ENCODE measurements at regions of chr9 and their contacts with region 1.

Region 1: GRCh38 chr9:29999645-30000044 is 2384.8 kb upstream of the ACO1 start:
- DNase-seq: no peak
- H3K4me3 Mint-ChIP-seq: no peak overlapping the region
- H3K27ac Mint-ChIP-seq: no peak overlapping the region
- H3K4me1 Mint-ChIP-seq: no peaks in the 10 kb centered on the region
- H3K27me3 Mint-ChIP-seq: no peaks in the 10 kb centered on the region

Region 2: DNA sequence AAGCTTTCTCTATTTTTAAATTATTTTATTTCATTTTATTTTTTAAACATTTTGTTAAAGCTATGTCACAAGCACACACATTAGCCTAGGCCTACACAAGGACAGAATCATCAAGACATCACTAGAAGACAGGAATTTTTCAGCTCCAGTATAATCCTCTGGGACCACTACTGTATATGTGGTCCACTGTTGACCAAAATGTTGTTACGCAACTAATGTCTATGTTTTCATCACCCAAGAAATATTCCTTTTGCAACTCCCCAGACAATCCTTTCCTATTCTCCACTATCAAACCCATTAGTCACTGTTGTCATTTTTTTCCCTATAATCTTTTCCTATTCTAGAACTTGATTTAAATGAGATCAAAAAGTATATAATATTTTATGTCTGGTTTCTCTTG is 54.6 kb before region 1 on chr9:
- intact Hi-C with region 1: loop called (anchors 10 kb)
- DNase-seq: no peak
- H3K4me3 Mint-ChIP-seq: no peak overlapping the region
- H3K27ac Mint-ChIP-seq: no peak overlapping the region
- H3K4me1 Mint-ChIP-seq: no peaks in the 10 kb centered on the region
- H3K27me3 Mint-ChIP-seq: no peaks in the 10 kb centered on the region

Measured in activated T-helper 2 cell treated with anti-CD3 and anti-CD28 coated beads, Interferon-gamma antibody, Interleukin-2, Interleukin-4, amounts not matched to agents 10 μg/mL and 5 μg/mL and 100 μg/mL, durations not matched to agents 14 hours and 24 hours and 36 hours (primary cell).